Natural killer cell (primary cell): ENCODE measurements at regions of chr12 and their contacts with region 1.

Region 1: DNA sequence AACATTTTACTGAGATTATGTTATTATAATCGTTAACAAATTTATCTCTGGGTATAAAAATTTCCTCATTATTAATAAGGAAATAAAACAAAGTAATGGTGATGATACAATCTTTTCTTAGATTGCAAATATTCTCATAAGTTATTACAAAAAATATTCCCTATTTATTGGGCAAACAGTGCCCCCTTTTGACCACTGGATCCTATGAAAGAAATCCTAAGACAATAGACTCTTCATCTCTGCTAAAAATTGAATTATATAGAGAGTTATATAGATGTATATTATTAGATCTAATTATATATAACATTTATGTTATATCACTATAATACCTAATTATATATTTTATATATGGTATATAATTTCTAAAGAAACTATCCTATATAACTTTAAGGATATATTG is 94.2 kb upstream of the FGD4 start:
- DNase-seq: peak in 1 of 2 donors; percentile 71
- ATAC-seq: peak in 1 of 3 donors; percentile 29
- H3K4me3 ChIP-seq: no peak overlapping the region
- H3K4me3 Mint-ChIP-seq: no peak overlapping the region
- H3K27ac ChIP-seq: no peak overlapping the region
- H3K27ac Mint-ChIP-seq: no peak overlapping the region
- H3K4me1 ChIP-seq: no peaks in the 10 kb centered on the region
- H3K4me1 Mint-ChIP-seq: no peaks in the 10 kb centered on the region
- H3K27me3 ChIP-seq: no peaks in the 10 kb centered on the region
- H3K27me3 Mint-ChIP-seq: no peaks in the 10 kb centered on the region
- CTCF ChIP-seq: peak; percentile 60

Region 2: DNA sequence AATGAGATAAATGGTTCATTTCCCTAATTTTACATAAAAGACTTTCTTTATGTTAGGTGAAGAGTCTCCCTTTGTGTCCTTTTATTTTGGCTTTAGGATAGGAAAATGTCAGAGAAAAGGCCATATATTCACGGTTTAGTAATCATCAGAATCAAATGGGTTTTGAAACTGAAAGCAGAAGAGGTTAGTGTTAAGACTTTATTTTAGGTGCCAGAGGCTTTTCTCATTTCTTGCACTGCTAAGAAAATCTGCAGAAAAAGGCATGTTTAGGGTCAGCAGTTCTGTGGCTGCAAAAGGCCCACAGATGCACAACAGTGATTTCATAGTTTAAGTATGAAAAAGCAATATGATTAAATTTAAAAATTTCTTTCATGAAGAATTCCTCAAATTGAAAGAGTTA is 898.8 kb before region 1 on chr12:
- intact Hi-C with region 1: loop called (anchors 5 kb)
- DNase-seq: no peak
- ATAC-seq: no peak
- H3K4me3 ChIP-seq: no peak overlapping the region
- H3K4me3 Mint-ChIP-seq: no peak overlapping the region
- H3K27ac ChIP-seq: no peak overlapping the region
- H3K27ac Mint-ChIP-seq: no peak overlapping the region
- H3K4me1 ChIP-seq: peaks cover 5% of the 10 kb centered on the region
- H3K4me1 Mint-ChIP-seq: no peaks in the 10 kb centered on the region
- H3K27me3 ChIP-seq: no peaks in the 10 kb centered on the region
- H3K27me3 Mint-ChIP-seq: peaks cover 0 to 2% of the 10 kb centered on the region in 2 donors
- CTCF ChIP-seq: no peak

Region 3: GRCh38 chr12:31650927-31651326 is 654.2 kb before region 1 on chr12:
- intact Hi-C with region 1: loop called (anchors 5 kb)
- DNase-seq: no peak
- ATAC-seq: no peak
- H3K4me3 ChIP-seq: no peak overlapping the region
- H3K4me3 Mint-ChIP-seq: no peak overlapping the region
- H3K27ac ChIP-seq: no peak overlapping the region
- H3K27ac Mint-ChIP-seq: no peak overlapping the region
- H3K4me1 ChIP-seq: peaks cover 13% of the 10 kb centered on the region
- H3K4me1 Mint-ChIP-seq: peaks cover 12 to 22% of the 10 kb centered on the region in 2 donors
- H3K27me3 ChIP-seq: no peaks in the 10 kb centered on the region
- H3K27me3 Mint-ChIP-seq: peaks cover 0 to 7% of the 10 kb centered on the region in 2 donors
- CTCF ChIP-seq: no peak

Region 4: DNA sequence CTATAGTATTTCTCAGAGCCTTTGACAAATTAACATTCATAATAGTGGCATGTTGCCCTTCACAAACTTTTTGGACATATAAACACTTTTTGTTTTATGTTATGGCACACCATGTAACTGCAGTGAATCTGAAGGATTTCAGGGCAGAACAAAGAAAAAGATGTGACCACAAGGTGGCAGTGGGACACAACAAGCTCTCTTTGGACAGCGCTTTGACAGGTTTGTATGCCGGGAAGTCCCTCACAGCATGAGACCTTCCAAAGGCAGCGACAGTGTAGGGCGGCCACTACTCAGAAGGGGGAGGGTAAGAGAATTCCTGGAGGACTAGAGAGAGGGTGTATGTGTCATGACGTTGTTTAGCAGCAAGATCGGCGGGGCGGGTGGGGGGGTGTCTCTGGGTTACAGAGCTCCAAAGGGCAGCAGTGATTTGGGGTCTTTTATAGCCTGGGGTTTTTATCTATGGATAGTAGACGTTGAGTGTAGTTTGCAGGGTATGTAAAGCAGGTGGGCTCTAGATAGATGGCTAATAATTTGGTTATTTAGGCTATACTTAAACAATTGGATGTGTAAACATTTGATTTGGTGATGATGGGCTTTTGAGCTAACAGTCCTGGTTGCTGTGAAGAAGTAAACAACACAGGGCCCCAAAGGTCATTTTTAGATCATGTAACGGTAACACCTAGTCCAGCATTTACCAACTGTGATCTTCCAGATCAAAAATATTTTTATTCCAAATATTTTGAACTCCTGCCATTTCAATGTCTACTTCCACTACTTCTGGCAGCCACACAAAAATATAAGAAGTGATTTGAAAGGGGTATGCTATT is 622.8 kb before region 1 on chr12:
- intact Hi-C with region 1: loop called (anchors 2 kb)
- DNase-seq: peak; percentile 47 to 91
- ATAC-seq: peak; percentile 93 to 99 (median 93)
- H3K4me3 ChIP-seq: no peak overlapping the region
- H3K4me3 Mint-ChIP-seq: no peak overlapping the region
- H3K27ac ChIP-seq: peak overlapping the region; percentile 8
- H3K27ac Mint-ChIP-seq: peak overlapping the region; percentile 34 to 84
- H3K4me1 ChIP-seq: peaks cover 9% of the 10 kb centered on the region
- H3K4me1 Mint-ChIP-seq: peaks cover 4 to 16% of the 10 kb centered on the region in 2 donors
- H3K27me3 ChIP-seq: no peaks in the 10 kb centered on the region
- H3K27me3 Mint-ChIP-seq: no peaks in the 10 kb centered on the region
- CTCF ChIP-seq: peak; percentile 74

Region 5: DNA sequence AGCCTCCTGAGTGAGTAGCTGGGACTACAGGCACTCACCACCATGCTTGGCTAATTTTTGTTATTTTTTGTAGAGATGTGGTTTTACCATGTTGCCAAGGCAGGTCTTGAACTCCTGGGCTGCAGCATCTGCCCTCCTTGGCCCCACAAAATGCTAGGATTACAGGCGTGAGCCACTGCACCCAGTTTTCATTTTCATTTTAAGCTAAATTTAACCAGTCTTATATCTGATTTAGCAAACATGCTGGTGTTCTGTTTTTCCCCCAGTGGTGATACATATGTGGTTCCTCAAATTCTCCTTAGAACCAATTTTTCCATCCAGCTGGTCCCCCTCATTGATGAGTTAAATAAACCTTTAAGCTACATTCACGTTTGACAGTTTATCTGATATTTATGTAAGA is 242.3 kb before region 1 on chr12:
- intact Hi-C with region 1: loop called (anchors 2 kb)
- DNase-seq: no peak
- ATAC-seq: no peak
- H3K4me3 ChIP-seq: no peak overlapping the region
- H3K4me3 Mint-ChIP-seq: no peak overlapping the region
- H3K27ac ChIP-seq: no peak overlapping the region
- H3K27ac Mint-ChIP-seq: no peak overlapping the region
- H3K4me1 ChIP-seq: peaks cover 5% of the 10 kb centered on the region
- H3K4me1 Mint-ChIP-seq: peaks cover 0 to 4% of the 10 kb centered on the region in 2 donors
- H3K27me3 ChIP-seq: no peaks in the 10 kb centered on the region
- H3K27me3 Mint-ChIP-seq: peaks cover 0 to 4% of the 10 kb centered on the region in 2 donors
- CTCF ChIP-seq: no peak